Caco-2 (cell line): ENCODE measurements at regions of chr5 and their contacts with region 1.

Region 1: GRCh38 chr5:43389679-43390329 is 22.4 kb downstream of the CCL28 start:
- DNase-seq: peak; percentile 67 to 86
- H3K4me3 ChIP-seq: no peak overlapping the region
- H3K4me3 Mint-ChIP-seq: no peak overlapping the region
- H3K27ac Mint-ChIP-seq: no peak overlapping the region
- H3K4me1 ChIP-seq: peaks cover 5% of the 10 kb centered on the region; the same call in 1 of the 2 replicates
- H3K4me1 Mint-ChIP-seq: peaks cover 14% of the 10 kb centered on the region
- H3K27me3 ChIP-seq: no peaks in the 10 kb centered on the region
- H3K27me3 Mint-ChIP-seq: no peaks in the 10 kb centered on the region
- CTCF ChIP-seq: peak; percentile 80 to 86

Region 2: DNA sequence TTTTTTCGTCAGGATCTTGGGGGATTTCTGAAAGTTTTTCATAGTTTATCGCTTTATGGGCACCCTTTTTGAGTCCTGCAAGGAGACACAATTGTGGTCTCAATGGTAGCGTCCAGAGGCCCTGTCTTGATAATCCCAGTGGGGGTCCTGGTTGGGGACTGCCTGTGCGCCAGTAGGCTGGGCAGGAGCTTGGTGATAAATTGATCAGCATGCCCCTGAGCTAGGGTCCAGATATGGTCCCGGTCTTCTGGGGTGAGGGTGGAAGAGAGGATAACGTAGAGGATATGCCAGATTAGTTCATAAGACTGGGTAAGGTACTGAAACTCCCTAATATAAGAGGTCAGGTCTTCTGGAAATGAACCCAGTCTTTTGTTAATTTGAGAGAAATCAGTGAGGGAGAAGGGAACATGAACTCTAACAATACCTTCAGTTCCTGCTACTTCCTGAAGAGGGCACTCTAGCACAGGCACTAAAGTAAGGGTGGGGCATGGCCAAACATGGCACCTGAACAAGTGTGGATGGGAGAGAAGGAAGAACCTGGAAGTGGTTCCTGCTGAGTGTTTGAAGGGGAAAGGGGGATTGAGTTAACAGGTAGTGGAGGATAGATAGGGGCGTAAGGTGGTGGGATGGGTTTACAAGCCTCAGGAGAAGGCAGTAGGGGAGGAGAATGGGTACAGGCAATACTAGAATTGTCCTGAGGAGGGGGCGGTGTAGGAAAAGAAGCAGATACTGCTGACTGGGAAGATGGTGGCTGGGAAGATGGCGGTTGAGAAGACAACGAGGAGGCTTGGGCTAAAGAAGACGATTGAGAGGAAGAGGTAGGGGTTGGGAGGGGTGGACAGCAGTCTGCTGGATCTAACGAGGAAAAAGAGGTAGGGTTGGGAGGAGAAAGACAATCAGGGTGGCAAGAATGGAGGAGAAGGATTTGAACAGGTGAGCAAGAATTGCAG is 315.9 kb before region 1 on chr5:
- CTCF ChIA-PET with region 1: no interaction called
- POLR2A ChIA-PET with region 1: no interaction called
- intact Hi-C with region 1: loop called (anchors 1 kb)
- DNase-seq: peak; percentile 69 to 74
- H3K4me3 ChIP-seq: no peak overlapping the region
- H3K4me3 Mint-ChIP-seq: no peak overlapping the region
- H3K27ac Mint-ChIP-seq: peak overlapping the region; percentile 61
- H3K4me1 ChIP-seq: peaks cover 36% of the 10 kb centered on the region
- H3K4me1 Mint-ChIP-seq: peaks cover 43% of the 10 kb centered on the region
- H3K27me3 ChIP-seq: no peaks in the 10 kb centered on the region
- H3K27me3 Mint-ChIP-seq: no peaks in the 10 kb centered on the region
- CTCF ChIP-seq: peak; percentile 53 to 79

Region 3: GRCh38 chr5:43113546-43113945 is 276.3 kb before region 1 on chr5:
- CTCF ChIA-PET with region 1: no interaction called
- POLR2A ChIA-PET with region 1: no interaction called
- intact Hi-C with region 1: no loop called
- DNase-seq: no peak
- H3K4me3 ChIP-seq: no peak overlapping the region
- H3K4me3 Mint-ChIP-seq: no peak overlapping the region
- H3K27ac Mint-ChIP-seq: no peak overlapping the region
- H3K4me1 ChIP-seq: peaks cover 3% of the 10 kb centered on the region; the same call in 1 of the 2 replicates
- H3K4me1 Mint-ChIP-seq: no peaks in the 10 kb centered on the region
- H3K27me3 ChIP-seq: no peaks in the 10 kb centered on the region
- H3K27me3 Mint-ChIP-seq: peaks cover 3% of the 10 kb centered on the region
- CTCF ChIP-seq: no peak

Region 4: DNA sequence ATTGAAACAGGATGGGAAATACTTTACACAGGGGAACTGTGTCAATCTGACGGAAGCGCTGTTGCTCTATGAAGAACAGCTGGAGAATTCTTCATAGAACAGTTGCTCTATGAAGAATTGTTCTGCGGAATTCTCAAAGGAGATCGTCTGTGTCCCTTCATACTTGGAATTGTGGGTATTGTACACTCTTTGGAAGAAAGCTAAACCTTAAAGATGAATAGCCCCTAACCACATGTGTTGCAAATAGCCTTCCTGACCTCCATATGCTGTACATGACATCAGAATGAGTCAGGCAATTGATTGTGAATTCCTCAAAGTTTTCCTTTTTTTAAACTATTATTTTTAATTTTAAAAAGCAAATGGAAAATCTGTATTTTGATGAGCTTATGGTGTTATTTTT is 182.2 kb before region 1 on chr5:
- CTCF ChIA-PET with region 1: no interaction called
- POLR2A ChIA-PET with region 1: no interaction called
- intact Hi-C with region 1: no loop called
- DNase-seq: no peak
- H3K4me3 ChIP-seq: no peak overlapping the region
- H3K4me3 Mint-ChIP-seq: no peak overlapping the region
- H3K27ac Mint-ChIP-seq: no peak overlapping the region
- H3K4me1 ChIP-seq: peaks cover 7% of the 10 kb centered on the region; the same call in 1 of the 2 replicates
- H3K4me1 Mint-ChIP-seq: no peaks in the 10 kb centered on the region
- H3K27me3 ChIP-seq: no peaks in the 10 kb centered on the region
- H3K27me3 Mint-ChIP-seq: no peaks in the 10 kb centered on the region
- CTCF ChIP-seq: no peak

Region 5: DNA sequence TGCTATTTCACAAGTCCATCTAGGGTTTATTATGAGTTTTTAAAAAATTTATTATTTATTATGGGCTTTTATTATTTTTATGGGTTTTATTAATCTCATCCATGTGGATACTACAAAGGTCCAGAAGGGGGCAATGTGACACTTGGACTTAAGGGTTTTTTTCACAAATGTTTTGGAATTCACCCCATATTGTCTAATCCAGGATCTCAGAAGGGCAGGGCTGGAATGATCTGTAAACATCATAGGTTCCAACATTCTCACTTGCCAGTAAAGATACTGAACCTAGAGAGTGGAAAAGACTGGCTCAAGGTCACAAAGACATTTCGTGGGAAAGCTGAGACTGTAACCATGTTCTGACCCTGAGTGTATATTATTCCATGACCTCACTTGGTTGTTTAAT is 162.1 kb before region 1 on chr5:
- CTCF ChIA-PET with region 1: interaction called, 4 read pairs
- POLR2A ChIA-PET with region 1: no interaction called
- intact Hi-C with region 1: loop called (anchors 1 kb)
- DNase-seq: peak in 1 of 2 experiments; percentile 43
- H3K4me3 ChIP-seq: no peak overlapping the region
- H3K4me3 Mint-ChIP-seq: no peak overlapping the region
- H3K27ac Mint-ChIP-seq: no peak overlapping the region
- H3K4me1 ChIP-seq: no peaks in the 10 kb centered on the region
- H3K4me1 Mint-ChIP-seq: no peaks in the 10 kb centered on the region
- H3K27me3 ChIP-seq: no peaks in the 10 kb centered on the region
- H3K27me3 Mint-ChIP-seq: no peaks in the 10 kb centered on the region
- CTCF ChIP-seq: peak; percentile 52 to 67

Region 6: GRCh38 chr5:43313035-43313853 is 76.6 kb before region 1 on chr5 and contains the start of gene HMGCS1:
- CTCF ChIA-PET with region 1: interaction called, 25 read pairs
- POLR2A ChIA-PET with region 1: interaction called, 10 read pairs
- intact Hi-C with region 1: no loop called
- DNase-seq: peak; percentile 99 to 100
- H3K4me3 ChIP-seq: peak within 1 kb of the TSS; percentile 56
- H3K4me3 Mint-ChIP-seq: peak within 1 kb of the TSS; percentile 99
- H3K27ac Mint-ChIP-seq: peak within 1 kb of the TSS; percentile 83
- H3K4me1 ChIP-seq: peaks cover 49% of the 10 kb centered on the region
- H3K4me1 Mint-ChIP-seq: peaks cover 34% of the 10 kb centered on the region
- H3K27me3 ChIP-seq: no peaks in the 10 kb centered on the region
- H3K27me3 Mint-ChIP-seq: no peaks in the 10 kb centered on the region
- CTCF ChIP-seq: no peak
- total RNA-seq, gene HMGCS1: 205 and 211 TPM in 2 replicates

Region 7: DNA sequence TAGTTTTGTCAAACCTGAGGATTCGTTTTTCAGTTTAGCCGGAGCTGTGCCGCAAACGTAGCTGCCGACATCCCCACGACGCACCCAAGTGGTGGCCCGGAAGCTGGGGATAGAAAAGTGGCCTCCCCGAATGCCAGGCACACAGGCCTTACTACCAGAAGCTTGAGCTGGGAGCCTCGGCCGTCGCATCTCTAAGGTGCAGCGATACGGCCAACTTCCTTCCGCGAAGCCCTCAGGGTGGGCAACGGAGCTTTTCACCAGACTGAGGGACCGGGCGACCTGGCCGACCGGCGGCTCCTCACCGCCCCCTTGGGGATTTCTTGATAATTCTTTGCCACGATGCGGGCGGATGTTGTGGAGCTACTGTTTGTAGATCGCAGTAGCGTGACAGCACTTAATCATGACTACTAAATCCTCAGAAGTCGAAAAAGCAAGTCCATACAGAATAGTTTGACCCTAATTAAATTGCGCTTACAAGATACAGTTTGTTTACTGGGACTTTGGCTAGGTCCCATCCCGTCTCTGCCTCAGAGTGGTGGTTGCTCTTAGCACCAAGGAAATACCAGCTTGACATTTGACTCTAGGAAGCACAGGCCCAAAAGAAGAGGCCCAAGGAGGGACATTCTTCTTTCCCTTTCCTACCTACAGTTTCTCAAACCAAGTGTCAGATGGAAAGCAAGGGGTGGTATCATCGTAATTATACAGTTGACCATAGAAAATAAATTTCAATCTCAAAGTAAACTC is 94.5 kb after region 1 on chr5:
- CTCF ChIA-PET with region 1: interaction called, 17 read pairs
- POLR2A ChIA-PET with region 1: interaction called, 5 read pairs
- intact Hi-C with region 1: no loop called
- DNase-seq: peak; percentile 83 to 91
- H3K4me3 ChIP-seq: peak overlapping the region; percentile 81
- H3K4me3 Mint-ChIP-seq: peak overlapping the region; percentile 95
- H3K27ac Mint-ChIP-seq: peak overlapping the region; percentile 99
- H3K4me1 ChIP-seq: peaks cover 3% of the 10 kb centered on the region; the same call in 1 of the 2 replicates
- H3K4me1 Mint-ChIP-seq: peaks cover 11% of the 10 kb centered on the region
- H3K27me3 ChIP-seq: no peaks in the 10 kb centered on the region
- H3K27me3 Mint-ChIP-seq: no peaks in the 10 kb centered on the region
- CTCF ChIP-seq: peak; percentile 75 to 82